ENCODE measurements at regions of chr20 and their contacts with region 1.

Region 1: DNA sequence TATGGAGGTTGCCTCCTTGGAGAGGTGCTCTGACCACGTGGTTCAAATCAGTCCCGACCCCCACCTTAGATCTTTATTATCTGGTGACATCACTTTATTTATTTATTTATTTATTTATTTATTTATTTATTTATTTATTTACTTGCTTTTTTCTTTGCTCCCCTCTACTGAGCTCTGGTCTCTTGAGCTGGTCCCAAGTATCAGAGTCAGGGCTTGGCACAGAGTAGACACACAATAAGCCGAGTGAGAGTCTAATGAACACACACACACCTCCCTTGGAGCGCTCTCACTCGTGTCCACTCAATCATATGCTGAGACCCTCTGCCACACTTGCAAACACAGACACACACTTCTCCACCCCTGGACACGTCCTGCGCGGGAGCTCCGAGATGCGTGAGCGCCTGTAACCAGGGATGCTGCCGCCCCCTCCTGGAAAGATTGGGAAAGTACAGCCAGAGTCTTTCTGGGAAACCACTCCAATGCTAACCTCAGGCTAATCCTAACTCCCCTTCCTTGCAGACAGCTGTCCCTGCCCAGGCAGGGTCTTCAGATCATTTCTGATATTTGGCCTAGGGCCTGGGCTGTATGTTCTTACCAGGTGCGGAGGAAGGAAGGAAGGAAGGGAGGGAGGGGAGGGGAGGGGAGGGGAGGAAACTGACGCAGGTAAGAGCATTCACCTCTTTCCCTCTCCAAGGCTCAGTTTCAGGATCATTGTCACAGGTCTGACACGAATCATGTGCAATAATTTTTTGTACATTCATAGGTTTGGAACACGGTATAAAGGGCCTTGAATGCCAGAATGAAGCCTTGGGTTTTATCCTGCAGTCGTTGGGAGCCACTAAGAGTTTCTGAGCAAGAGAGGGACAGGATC is 70.9 kb downstream of the STK35 start:
- DNase-seq: peak; percentile 50 to 75
- ATAC-seq: peak; percentile 64 to 85 (median 66)
- H3K4me3 ChIP-seq: no peak overlapping the region
- H3K4me3 Mint-ChIP-seq: no peak overlapping the region
- H3K27ac ChIP-seq: no peak overlapping the region
- H3K27ac Mint-ChIP-seq: no peak overlapping the region
- H3K4me1 ChIP-seq: peaks cover 4% of the 10 kb centered on the region
- H3K4me1 Mint-ChIP-seq: peaks cover 5 to 6% of the 10 kb centered on the region in 2 donors
- H3K27me3 ChIP-seq: no peaks in the 10 kb centered on the region
- H3K27me3 Mint-ChIP-seq: peaks cover 10 to 19% of the 10 kb centered on the region in 2 donors
- CTCF ChIP-seq: peak; percentile 75

Region 2: DNA sequence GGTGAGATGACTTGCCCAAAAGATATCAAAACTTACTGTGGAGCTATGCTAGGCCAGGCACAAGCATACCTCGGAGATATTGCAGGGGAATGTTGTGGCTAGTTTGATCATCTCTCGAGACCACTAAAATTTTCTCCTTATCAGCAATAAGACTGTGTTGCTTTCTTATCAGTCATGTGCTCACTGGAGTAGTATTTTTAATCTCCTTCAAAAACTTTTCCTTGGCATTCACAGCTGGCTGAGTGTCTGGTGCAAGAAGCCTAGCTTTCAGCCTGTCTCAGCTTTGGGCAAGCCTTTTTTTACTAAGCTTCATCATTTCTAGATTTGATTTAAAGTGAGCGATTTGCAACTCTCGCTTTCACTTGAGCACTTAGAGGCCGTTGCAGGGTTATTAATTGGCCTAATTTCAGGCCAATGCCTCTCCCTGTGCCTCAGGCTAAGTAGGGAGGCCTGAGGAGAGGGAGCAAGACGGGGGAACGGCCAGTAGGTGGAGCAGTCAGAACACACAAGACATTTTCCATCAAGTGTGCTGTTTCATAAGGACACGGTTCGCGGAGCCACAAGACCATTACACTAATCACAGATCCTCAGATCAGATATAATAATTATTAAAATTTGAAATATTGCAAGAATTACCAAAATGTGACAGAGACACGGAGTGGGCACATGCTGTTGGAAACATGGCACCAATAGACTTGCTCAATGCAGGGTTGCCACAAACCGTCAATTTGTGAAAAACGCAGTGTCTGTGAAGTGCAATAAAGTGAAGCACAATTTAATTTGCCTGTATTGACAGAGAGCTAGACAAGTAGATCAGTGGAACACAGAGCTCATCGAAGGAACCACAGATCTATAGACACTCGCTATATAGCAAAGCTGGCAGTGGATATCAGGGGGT is 408.2 kb before region 1 on chr20:
- intact Hi-C with region 1: loop called (anchors 10 kb)
- DNase-seq: peak in 1 of 2 donors; percentile 76
- ATAC-seq: peak; percentile 31 to 79 (median 64)
- H3K4me3 ChIP-seq: no peak overlapping the region
- H3K4me3 Mint-ChIP-seq: no peak overlapping the region
- H3K27ac ChIP-seq: no peak overlapping the region
- H3K27ac Mint-ChIP-seq: no peak overlapping the region
- H3K4me1 ChIP-seq: no peaks in the 10 kb centered on the region
- H3K4me1 Mint-ChIP-seq: no peaks in the 10 kb centered on the region
- H3K27me3 ChIP-seq: no peaks in the 10 kb centered on the region
- H3K27me3 Mint-ChIP-seq: peaks cover 6 to 9% of the 10 kb centered on the region in 2 donors
- CTCF ChIP-seq: peak; percentile 73

Region 3: DNA sequence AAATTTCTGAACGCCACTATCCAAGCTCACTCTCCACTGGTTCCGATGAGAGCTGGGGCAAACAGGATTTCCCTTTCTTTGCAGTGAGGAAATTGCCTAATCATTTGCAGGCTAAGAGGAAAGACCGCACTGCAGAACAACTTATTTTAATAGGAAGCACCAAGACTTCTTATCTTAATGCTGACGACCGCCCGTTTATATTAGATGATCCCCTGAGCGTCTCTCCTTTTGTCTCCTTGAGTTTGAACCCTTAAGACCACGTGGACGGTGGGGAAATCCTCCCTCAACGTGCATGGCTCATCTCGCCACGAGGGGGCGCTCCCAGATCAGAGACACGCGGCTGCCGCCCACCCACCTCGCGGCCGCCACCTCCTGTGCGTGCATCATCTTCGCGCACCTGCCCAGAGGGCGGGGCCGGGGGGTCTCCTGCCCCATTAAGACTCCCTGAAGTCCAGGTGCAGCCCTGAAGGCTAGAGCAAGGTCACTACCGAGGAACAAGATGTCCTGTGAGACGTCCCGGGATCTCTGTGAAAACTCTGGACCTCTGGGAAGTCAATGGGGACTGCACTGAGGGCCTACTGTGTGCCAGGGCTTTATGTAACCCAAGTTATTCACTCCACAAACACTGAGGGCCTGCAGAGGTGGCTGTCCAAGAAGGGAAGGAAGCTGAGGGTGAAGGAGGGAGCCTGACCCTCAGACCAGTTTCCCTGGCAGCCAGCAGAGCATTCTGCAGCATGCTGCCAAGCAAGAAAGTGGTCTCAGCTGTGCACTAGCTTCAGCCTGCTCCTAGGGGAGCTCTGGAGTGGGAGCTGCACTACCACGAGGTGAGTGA is 206.8 kb before region 1 on chr20:
- intact Hi-C with region 1: loop called (anchors 1 kb)
- DNase-seq: peak; percentile 62 to 82
- ATAC-seq: peak; percentile 60 to 85 (median 70)
- H3K4me3 ChIP-seq: no peak overlapping the region
- H3K4me3 Mint-ChIP-seq: no peak overlapping the region
- H3K27ac ChIP-seq: no peak overlapping the region
- H3K27ac Mint-ChIP-seq: no peak overlapping the region
- H3K4me1 ChIP-seq: peaks cover 18% of the 10 kb centered on the region
- H3K4me1 Mint-ChIP-seq: peaks cover 6 to 9% of the 10 kb centered on the region in 2 donors
- H3K27me3 ChIP-seq: no peaks in the 10 kb centered on the region
- H3K27me3 Mint-ChIP-seq: peaks cover 13 to 33% of the 10 kb centered on the region in 2 donors
- CTCF ChIP-seq: peak; percentile 90

Region 4: DNA sequence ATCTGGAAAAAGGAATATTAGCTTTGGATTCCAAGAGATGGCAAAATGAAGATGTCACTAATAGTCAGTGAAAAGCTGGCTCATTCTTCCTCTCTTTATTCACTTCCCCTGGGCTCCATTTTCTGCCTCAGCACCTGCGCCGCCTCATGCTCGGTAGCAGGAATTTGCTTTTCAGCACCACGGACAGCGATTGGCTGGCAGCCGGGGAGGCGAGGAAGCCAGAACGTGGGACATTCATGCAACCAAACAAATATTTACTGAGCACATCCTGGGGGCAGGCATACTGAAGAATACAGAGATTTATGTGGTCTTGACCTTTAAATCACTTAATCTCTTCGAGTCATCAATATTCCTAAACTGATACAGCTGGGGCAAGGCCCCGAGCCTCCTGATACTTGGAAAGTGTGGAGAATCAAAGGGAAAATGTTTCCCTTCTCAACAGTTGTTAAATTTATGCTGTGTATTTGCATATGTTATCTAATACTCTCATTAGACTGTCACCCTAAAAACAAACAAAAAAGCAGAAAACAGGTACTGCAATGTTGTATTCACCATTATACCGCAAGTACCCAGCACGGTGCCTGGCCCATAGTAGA is 166.6 kb before region 1 on chr20:
- intact Hi-C with region 1: loop called (anchors 1 kb)
- DNase-seq: peak; percentile 44 to 73
- ATAC-seq: peak in 1 of 3 donors; percentile 50
- H3K4me3 ChIP-seq: no peak overlapping the region
- H3K4me3 Mint-ChIP-seq: no peak overlapping the region
- H3K27ac ChIP-seq: no peak overlapping the region
- H3K27ac Mint-ChIP-seq: no peak overlapping the region
- H3K4me1 ChIP-seq: no peaks in the 10 kb centered on the region
- H3K4me1 Mint-ChIP-seq: no peaks in the 10 kb centered on the region
- H3K27me3 ChIP-seq: no peaks in the 10 kb centered on the region
- H3K27me3 Mint-ChIP-seq: peaks cover 11 to 22% of the 10 kb centered on the region in 2 donors
- CTCF ChIP-seq: no peak

Region 5: GRCh38 chr20:2224368-2224639 is 51.8 kb after region 1 on chr20:
- intact Hi-C with region 1: no loop called
- DNase-seq: no peak
- ATAC-seq: no peak
- H3K4me3 ChIP-seq: no peak overlapping the region
- H3K4me3 Mint-ChIP-seq: no peak overlapping the region
- H3K27ac ChIP-seq: no peak overlapping the region
- H3K27ac Mint-ChIP-seq: no peak overlapping the region
- H3K4me1 ChIP-seq: no peaks in the 10 kb centered on the region
- H3K4me1 Mint-ChIP-seq: no peaks in the 10 kb centered on the region
- H3K27me3 ChIP-seq: no peaks in the 10 kb centered on the region
- H3K27me3 Mint-ChIP-seq: peaks cover 9 to 27% of the 10 kb centered on the region in 2 donors
- CTCF ChIP-seq: no peak